Left colon (tissue), 2 donors: ENCODE measurements at regions of chr14 and their contacts with region 1.

Region 1: GRCh38 chr14:61475316-61475715 is 153.9 kb downstream of the PRKCH start:
- DNase-seq: no peak
- ATAC-seq: peak; percentile 54

Region 2: GRCh38 chr14:61703342-61704129 is 228.2 kb after region 1 on chr14:
- intact Hi-C with region 1: loop called in 1 of 2 experiments (anchors 10 kb)
- DNase-seq: no peak
- ATAC-seq: peak; percentile 21